ENCODE measurements at regions of chr11 and their contacts with region 1.

Region 1: GRCh38 chr11:6200975-6201374 is 2.0 kb downstream of the OR52W1 start:
- DNase-seq: no peak
- H3K4me3 Mint-ChIP-seq: no peak overlapping the region
- H3K27ac Mint-ChIP-seq: peak overlapping the region; percentile 52
- H3K4me1 Mint-ChIP-seq: peaks cover 43% of the 10 kb centered on the region
- H3K27me3 Mint-ChIP-seq: peaks cover 2% of the 10 kb centered on the region

Region 2: GRCh38 chr11:6127881-6128280 is 73.1 kb before region 1 on chr11:
- intact Hi-C with region 1: loop called (anchors 5 kb)
- DNase-seq: no peak
- H3K4me3 Mint-ChIP-seq: no peak overlapping the region
- H3K27ac Mint-ChIP-seq: no peak overlapping the region
- H3K4me1 Mint-ChIP-seq: peaks cover 2% of the 10 kb centered on the region
- H3K27me3 Mint-ChIP-seq: peaks cover 2% of the 10 kb centered on the region

Region 3: DNA sequence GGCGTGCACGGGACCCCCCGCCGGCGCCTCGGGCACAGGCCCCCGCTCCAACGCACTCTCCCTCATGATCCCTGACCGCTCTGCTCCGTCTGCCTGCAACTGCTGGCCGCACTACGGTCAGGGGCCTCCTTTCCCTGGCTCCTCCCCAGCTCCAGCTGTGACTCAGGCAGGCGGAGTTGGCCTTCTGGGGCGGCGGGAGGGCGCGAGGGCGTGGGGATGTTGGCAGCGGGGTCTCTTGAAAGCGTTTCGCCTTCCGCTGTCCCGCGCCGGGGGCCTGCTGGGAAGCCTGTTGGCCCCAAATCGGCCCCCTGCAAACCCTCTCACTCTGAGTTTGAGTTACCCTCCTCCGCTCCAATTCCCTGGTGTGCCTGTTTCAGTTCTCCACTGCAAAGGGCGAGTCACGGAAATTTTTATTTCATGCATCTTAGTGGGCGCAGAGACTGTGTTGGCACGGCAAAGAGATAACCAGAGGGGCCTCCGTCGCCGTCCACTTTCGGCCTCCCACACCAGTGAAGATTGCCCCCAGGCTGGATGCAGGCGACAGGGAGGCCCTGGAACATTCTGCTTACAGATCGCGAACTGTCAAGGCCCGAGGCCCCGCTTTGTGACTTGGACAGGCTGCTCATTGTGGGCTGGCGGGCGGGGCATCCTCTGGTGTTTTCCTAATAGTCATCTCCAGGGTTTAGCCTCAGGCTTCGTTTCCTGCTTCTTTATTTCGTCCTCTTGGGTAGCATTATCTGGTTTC is 119.6 kb after region 1 on chr11 and contains the start of gene CAVIN3:
- intact Hi-C with region 1: no loop called
- DNase-seq: peak; percentile 72
- H3K4me3 Mint-ChIP-seq: peak within 1 kb of the TSS; percentile 87
- H3K27ac Mint-ChIP-seq: peak within 1 kb of the TSS; percentile 90
- H3K4me1 Mint-ChIP-seq: peaks cover 44% of the 10 kb centered on the region
- H3K27me3 Mint-ChIP-seq: peaks cover 1% of the 10 kb centered on the region
- total RNA-seq, gene CAVIN3: 83.1 and 84.3 TPM in 2 replicates

Measured in activated T-helper 2 cell treated with anti-CD3 and anti-CD28 coated beads, Interferon-gamma antibody, Interleukin-2, Interleukin-4, amounts not matched to agents 10 μg/mL and 5 μg/mL and 100 μg/mL, durations not matched to agents 14 hours and 24 hours and 36 hours (primary cell).